Transverse colon (tissue), 4 donors: ENCODE measurements at regions of chr9 and their contacts with region 1.

Region 1: DNA sequence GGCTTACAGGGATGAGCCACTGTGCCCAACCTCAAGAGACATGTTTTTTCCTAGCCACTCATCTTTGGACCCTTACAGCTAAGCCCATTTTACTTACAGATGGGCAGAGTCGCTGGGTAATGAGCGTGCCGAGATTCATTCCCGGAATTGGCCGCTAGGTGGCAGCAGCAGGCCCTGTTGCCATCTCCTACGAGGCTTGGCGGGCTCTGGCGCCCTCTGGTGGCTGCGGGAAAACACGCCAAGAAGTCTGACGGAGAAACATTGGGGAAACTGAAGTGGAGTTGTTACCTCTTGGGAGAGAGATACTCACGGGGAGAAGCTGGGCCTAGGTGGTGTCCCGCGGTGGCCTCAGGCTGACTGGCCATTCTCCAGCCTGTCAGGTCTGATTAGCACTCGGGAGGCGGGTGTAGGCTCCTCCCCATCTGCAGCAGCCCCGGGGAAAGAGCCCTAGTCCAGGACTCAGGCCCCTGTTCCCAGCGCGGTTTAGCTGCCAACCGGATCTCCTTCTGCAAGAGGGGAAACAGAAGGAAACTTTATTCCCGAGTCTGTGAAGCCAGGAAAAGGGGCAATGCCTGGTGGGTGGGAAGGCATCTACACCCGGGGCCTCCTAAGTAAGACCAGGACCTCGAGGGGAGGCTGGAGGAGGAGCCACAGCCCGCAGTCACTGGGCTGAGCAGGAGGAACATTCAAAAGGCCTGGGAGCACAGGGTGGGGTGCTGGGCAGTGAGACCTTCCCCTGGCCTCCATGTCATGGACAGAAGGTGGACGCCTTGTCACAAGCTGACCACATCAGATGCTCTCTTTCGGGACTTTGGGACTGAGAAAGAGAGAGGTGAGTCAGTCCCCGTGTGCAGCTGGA is 9.7 kb downstream of the PTGES2 start:
- DNase-seq: peak; percentile 97
- H3K4me3 ChIP-seq: no peak overlapping the region
- H3K27ac ChIP-seq: peak overlapping the region; percentile 84 to 96 (median 94)
- H3K4me1 ChIP-seq: peaks cover 3 to 32% (median 27%) of the 10 kb centered on the region in 4 donors
- H3K27me3 ChIP-seq: no peaks in the 10 kb centered on the region
- CTCF ChIP-seq: peak; percentile 100
- EP300 ChIP-seq: no peak
- POLR2A ChIP-seq: no peak

Region 2: GRCh38 chr9:127955294-127956035 is 162.4 kb before region 1 on chr9:
- in situ Hi-C with region 1: loop called in 1 of 4 experiments (anchors 25 kb)
- intact Hi-C with region 1: no loop called
- DNase-seq: peak; percentile 93
- H3K4me3 ChIP-seq: no peak overlapping the region
- H3K27ac ChIP-seq: peak overlapping the region; percentile 82 to 92 (median 87)
- H3K4me1 ChIP-seq: peaks cover 43 to 72% (median 55%) of the 10 kb centered on the region in 4 donors
- H3K27me3 ChIP-seq: no peaks in the 10 kb centered on the region
- CTCF ChIP-seq: peak; percentile 43 to 97 (median 68)
- EP300 ChIP-seq: no peak
- POLR2A ChIP-seq: peak; percentile 56

Region 3: GRCh38 chr9:130107234-130107861 is 1989.5 kb after region 1 on chr9:
- in situ Hi-C with region 1: no loop called
- intact Hi-C with region 1: no loop called
- DNase-seq: peak; percentile 85
- H3K4me3 ChIP-seq: no peak overlapping the region
- H3K27ac ChIP-seq: peak overlapping the region in 3 of 4 donors; percentile 52 to 78 (median 64)
- H3K4me1 ChIP-seq: peaks cover 0 to 1% (median 0%) of the 10 kb centered on the region in 4 donors
- H3K27me3 ChIP-seq: no peaks in the 10 kb centered on the region
- CTCF ChIP-seq: peak; percentile 76 to 83 (median 80)
- EP300 ChIP-seq: no peak
- POLR2A ChIP-seq: no peak